Activated CD4-positive, alpha-beta memory T cell treated with anti-CD3 and anti-CD28 coated beads, Interleukin-2, amount 10 ng/mL, durations not matched to agents 7 days and 5 days (primary cell): ENCODE measurements at regions of chr6 and their contacts with region 1.

Region 1: GRCh38 chr6:127266178-127266891 is at the start of gene RNF146:
- DNase-seq: peak; percentile 76
- H3K4me3 Mint-ChIP-seq: peak within 1 kb of the TSS; percentile 98
- H3K27ac Mint-ChIP-seq: peak within 1 kb of the TSS; percentile 100
- H3K4me1 Mint-ChIP-seq: peaks cover 34% of the 10 kb centered on the region
- H3K27me3 Mint-ChIP-seq: peaks cover 4% of the 10 kb centered on the region
- total RNA-seq, gene RNF146: 27.9 to 30.5 TPM

Region 2: DNA sequence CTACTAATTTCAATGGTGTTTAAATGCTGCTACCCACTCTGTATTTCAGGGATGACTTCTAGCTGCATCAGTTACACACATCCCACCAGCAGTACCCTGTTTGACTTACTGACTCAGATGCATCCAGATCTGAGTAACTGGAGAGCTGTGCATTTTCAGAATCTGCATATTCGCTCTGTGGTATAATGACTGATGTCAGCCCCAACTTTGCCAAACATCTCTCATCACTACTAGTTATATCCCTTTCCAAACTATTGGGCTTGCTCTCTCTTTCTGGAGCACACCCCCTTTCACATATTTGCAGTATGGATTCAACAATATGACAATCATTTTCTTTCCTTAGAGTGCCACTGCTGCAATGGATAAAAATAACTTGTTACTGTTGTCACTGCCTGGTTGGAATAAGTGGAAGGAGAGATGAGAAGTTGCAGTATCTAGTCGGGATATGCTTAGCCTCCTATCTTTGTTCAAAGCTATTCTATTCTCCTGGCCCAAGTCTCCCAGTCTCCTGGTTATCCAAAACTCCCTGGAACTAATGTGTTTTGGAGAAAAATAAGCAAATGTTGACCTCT is 151.2 kb before region 1 on chr6:
- CTCF ChIA-PET with region 1: no interaction called
- POLR2A ChIA-PET with region 1: no interaction called
- DNase-seq: no peak
- H3K4me3 Mint-ChIP-seq: no peak overlapping the region
- H3K27ac Mint-ChIP-seq: no peak overlapping the region
- H3K4me1 Mint-ChIP-seq: peaks cover 15% of the 10 kb centered on the region
- H3K27me3 Mint-ChIP-seq: peaks cover 50% of the 10 kb centered on the region

Region 3: GRCh38 chr6:127146932-127147331 is 119.4 kb before region 1 on chr6:
- CTCF ChIA-PET with region 1: no interaction called
- POLR2A ChIA-PET with region 1: no interaction called
- DNase-seq: no peak
- H3K4me3 Mint-ChIP-seq: no peak overlapping the region
- H3K27ac Mint-ChIP-seq: no peak overlapping the region
- H3K4me1 Mint-ChIP-seq: no peaks in the 10 kb centered on the region
- H3K27me3 Mint-ChIP-seq: peaks cover 10% of the 10 kb centered on the region

Region 4: GRCh38 chr6:127162836-127163235 is 103.5 kb before region 1 on chr6:
- CTCF ChIA-PET with region 1: no interaction called
- POLR2A ChIA-PET with region 1: no interaction called
- DNase-seq: no peak
- H3K4me3 Mint-ChIP-seq: no peak overlapping the region
- H3K27ac Mint-ChIP-seq: no peak overlapping the region
- H3K4me1 Mint-ChIP-seq: no peaks in the 10 kb centered on the region
- H3K27me3 Mint-ChIP-seq: peaks cover 4% of the 10 kb centered on the region

Region 5: GRCh38 chr6:127186889-127187288 is 79.4 kb before region 1 on chr6:
- CTCF ChIA-PET with region 1: interaction called, 26 read pairs
- POLR2A ChIA-PET with region 1: no interaction called
- DNase-seq: peak; percentile 70
- H3K4me3 Mint-ChIP-seq: no peak overlapping the region
- H3K27ac Mint-ChIP-seq: no peak overlapping the region
- H3K4me1 Mint-ChIP-seq: no peaks in the 10 kb centered on the region
- H3K27me3 Mint-ChIP-seq: peaks cover 8% of the 10 kb centered on the region

Region 6: GRCh38 chr6:127279815-127280214 is 13.5 kb after region 1 on chr6:
- CTCF ChIA-PET with region 1: interaction called, 22 read pairs
- POLR2A ChIA-PET with region 1: interaction called, 7 read pairs
- DNase-seq: no peak
- H3K4me3 Mint-ChIP-seq: no peak overlapping the region
- H3K27ac Mint-ChIP-seq: no peak overlapping the region
- H3K4me1 Mint-ChIP-seq: peaks cover 2% of the 10 kb centered on the region
- H3K27me3 Mint-ChIP-seq: no peaks in the 10 kb centered on the region

Region 7: DNA sequence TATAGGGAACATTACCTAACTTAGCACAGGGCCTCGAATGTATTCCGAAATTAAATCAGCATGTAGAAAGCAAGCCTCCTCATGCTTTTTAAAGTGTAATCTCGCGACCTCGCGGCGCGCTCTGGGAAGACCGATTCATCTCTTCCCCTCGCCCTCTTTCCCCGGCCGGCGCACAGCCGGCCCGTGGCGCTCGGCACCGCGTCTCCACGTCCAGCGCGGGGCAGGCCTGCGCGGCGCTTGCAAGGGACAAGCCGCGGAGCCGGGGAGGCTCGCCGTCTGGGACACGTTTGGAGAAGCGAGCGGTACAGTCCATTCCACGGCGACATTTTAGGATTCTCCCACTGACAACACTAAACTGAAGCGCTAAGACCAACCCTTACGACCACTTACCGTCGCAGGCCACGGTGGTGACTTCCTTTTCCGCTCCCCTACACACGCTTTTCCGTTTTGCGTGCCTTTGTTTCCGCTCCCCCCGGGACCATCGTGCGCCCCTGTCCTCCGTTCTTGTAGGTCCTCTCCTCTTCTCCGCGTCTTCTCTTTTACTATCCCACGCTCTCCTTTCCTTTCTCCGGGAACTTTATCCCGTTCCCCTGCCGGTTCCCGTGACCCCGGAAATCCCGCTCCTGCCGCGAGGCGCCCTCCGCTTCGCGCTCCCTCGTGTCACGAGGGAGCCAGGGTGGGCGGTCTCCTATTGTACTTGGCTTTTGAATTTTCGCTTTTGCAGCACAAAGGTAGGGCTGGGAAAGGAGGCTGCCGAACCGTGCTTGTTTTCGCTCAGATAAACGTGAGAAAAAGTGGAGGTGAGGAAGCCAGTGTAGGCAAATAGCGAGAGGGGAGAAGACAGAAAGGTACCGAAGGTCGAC is 76.8 kb after region 1 on chr6 and contains the start of gene ECHDC1:
- CTCF ChIA-PET with region 1: interaction called, 11 read pairs
- POLR2A ChIA-PET with region 1: interaction called, 12 read pairs
- DNase-seq: peak; percentile 74
- H3K4me3 Mint-ChIP-seq: no peak within 1 kb of the TSS
- H3K27ac Mint-ChIP-seq: no peak within 1 kb of the TSS
- H3K4me1 Mint-ChIP-seq: peaks cover 14% of the 10 kb centered on the region
- H3K27me3 Mint-ChIP-seq: no peaks in the 10 kb centered on the region
- total RNA-seq, gene ECHDC1: 35.1 to 35.5 TPM

Region 8: GRCh38 chr6:127539272-127539671 is 272.9 kb after region 1 on chr6:
- CTCF ChIA-PET with region 1: interaction called, 13 read pairs
- POLR2A ChIA-PET with region 1: no interaction called
- DNase-seq: no peak
- H3K4me3 Mint-ChIP-seq: no peak overlapping the region
- H3K27ac Mint-ChIP-seq: no peak overlapping the region
- H3K4me1 Mint-ChIP-seq: peaks cover 5% of the 10 kb centered on the region
- H3K27me3 Mint-ChIP-seq: peaks cover 19% of the 10 kb centered on the region

Region 9: DNA sequence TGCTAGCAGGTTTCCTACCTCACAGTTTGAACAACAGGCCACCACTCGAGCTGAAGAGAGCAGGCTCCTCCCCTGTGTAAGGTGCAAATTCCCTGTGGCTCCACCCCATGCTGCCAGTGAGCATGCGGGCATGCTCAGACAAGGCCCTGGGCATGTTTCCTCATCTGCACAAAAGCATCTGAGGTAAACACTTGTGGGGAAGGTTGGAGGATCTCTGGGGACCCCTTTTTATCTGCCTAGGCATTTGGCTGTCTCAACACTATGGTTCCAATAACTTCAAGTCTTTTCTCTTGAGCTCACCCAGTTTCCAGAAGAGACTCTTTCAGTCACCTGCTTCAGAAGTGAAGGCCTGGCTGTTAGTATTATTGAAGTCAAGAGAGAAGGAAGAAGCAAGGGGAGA is 320.0 kb after region 1 on chr6:
- CTCF ChIA-PET with region 1: no interaction called
- POLR2A ChIA-PET with region 1: no interaction called
- DNase-seq: no peak
- H3K4me3 Mint-ChIP-seq: no peak overlapping the region
- H3K27ac Mint-ChIP-seq: no peak overlapping the region
- H3K4me1 Mint-ChIP-seq: no peaks in the 10 kb centered on the region
- H3K27me3 Mint-ChIP-seq: no peaks in the 10 kb centered on the region